ENCODE measurements at regions of chr2 and their contacts with region 1.

Region 1: GRCh38 chr2:9813312-9814133 is 29.8 kb upstream of the TAF1B start:
- DNase-seq: peak; percentile 64 to 86
- ATAC-seq: peak; percentile 86 to 96
- H3K4me3 ChIP-seq: 0 out of 3 replicates have a peak overlapping the region, but pooled peaks have one; percentile 17
- H3K27ac ChIP-seq: peak overlapping the region; percentile 36 to 43; a peak in 5 of 6 replicates
- H3K4me1 ChIP-seq: peaks cover 7% of the 10 kb centered on the region; the same call in 2 of the 3 replicates
- CTCF ChIP-seq: peak; percentile 98
- EP300 ChIP-seq: no peak
- POLR2A ChIP-seq: no peak
- RAD21 ChIP-seq: peak; percentile 90 to 93

Region 2: GRCh38 chr2:9326975-9327374 is 486.5 kb before region 1 on chr2:
- CTCF ChIA-PET with region 1: no interaction called
- POLR2A ChIA-PET with region 1: no interaction called
- DNase-seq: peak in 1 of 2 experiments; percentile 36
- ATAC-seq: 0 out of 6 replicates have a peak, but pooled peaks of 1 of the 2 experiments have one; percentile 26
- H3K4me3 ChIP-seq: no peak overlapping the region
- H3K27ac ChIP-seq: peak overlapping the region; percentile 44 to 76; a peak in 5 of 6 replicates
- H3K4me1 ChIP-seq: peaks cover 19% of the 10 kb centered on the region
- CTCF ChIP-seq: no peak
- EP300 ChIP-seq: no peak
- POLR2A ChIP-seq: no peak
- RAD21 ChIP-seq: no peak

Region 3: DNA sequence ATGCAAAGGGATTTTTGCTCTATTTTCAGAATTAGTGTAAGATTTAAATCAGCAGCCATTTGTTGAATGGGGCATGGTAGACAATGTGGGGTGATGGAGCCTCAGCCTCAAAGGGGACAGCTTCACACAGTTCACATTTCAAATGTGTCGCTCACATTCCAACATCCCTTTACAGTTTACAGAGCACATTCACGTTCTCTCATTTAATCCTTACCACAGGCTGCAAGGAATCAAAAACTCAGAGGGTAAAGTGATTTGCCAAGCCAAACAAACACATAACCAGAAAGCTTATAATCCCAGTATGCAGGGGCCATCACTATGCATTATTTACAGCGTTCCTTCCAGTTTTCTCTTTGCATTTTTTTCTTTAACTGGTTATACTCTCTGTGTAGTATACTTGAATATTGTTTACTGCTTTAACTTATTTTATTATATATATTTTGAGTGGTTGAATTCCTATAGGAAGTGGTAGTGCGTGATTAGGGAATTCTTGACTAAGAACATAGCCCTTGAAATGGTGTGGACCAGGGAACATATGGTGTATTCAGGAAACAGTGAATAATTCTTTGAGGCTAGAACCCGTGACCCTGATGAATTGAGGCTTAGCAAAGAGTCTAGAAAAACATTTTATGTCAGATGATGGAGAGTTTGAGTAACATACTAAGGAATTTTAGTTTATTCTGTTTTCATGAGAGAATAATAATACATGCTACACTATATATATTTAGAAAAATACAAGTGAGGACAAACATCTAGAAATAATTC is 11.6 kb after region 1 on chr2:
- CTCF ChIA-PET with region 1: interaction called, 43 read pairs
- POLR2A ChIA-PET with region 1: no interaction called
- DNase-seq: no peak
- ATAC-seq: no peak
- H3K4me3 ChIP-seq: no peak overlapping the region
- H3K27ac ChIP-seq: no peak overlapping the region
- H3K4me1 ChIP-seq: peaks cover 4% of the 10 kb centered on the region
- CTCF ChIP-seq: no peak
- EP300 ChIP-seq: no peak
- POLR2A ChIP-seq: no peak
- RAD21 ChIP-seq: no peak

Region 4: GRCh38 chr2:9852881-9853280 is 39.4 kb after region 1 on chr2:
- CTCF ChIA-PET with region 1: interaction called, 13 read pairs
- POLR2A ChIA-PET with region 1: no interaction called
- DNase-seq: no peak
- ATAC-seq: no peak
- H3K4me3 ChIP-seq: no peak overlapping the region
- H3K27ac ChIP-seq: no peak overlapping the region
- H3K4me1 ChIP-seq: no peaks in the 10 kb centered on the region
- CTCF ChIP-seq: no peak
- EP300 ChIP-seq: no peak
- POLR2A ChIP-seq: no peak
- RAD21 ChIP-seq: no peak

Region 5: DNA sequence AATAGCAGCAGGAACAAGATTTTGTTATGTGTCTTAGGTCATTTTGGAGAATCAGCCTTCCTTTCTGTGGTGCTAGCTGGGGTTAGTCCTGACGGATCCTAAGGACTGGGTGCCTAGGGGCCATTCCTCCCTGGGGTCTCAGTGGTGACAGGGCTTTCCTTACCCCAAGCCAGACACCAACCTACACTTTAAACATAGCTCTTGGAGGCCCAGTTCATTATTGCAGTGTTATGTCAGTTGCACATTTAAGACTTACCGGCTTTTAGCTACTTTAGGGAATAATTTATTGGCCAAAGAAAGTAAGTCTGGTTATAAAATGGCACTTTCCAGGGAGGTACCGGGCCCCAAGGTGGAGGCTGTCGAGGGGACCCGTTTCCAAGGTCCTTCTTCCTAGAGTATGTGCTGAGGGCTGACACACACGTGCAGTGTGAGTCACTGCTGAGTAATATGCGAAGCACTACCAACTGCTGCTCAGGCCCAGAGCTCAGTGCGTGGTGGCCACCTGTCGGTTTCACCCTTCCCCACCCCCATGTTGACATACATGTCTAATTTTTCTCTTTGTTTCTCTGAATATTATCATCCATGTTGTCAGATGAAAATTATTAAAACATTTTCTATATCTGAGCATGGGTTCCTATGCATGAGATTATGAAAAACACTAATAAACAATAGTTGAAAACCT is 101.0 kb after region 1 on chr2:
- CTCF ChIA-PET with region 1: interaction called, 58 read pairs
- POLR2A ChIA-PET with region 1: no interaction called
- DNase-seq: peak; percentile 60 to 77
- ATAC-seq: peak; percentile 99 to 100
- H3K4me3 ChIP-seq: no peak overlapping the region
- H3K27ac ChIP-seq: peak overlapping the region; percentile 34 to 58; a peak in 5 of 6 replicates
- H3K4me1 ChIP-seq: peaks cover 12% of the 10 kb centered on the region
- CTCF ChIP-seq: peak; percentile 59
- EP300 ChIP-seq: no peak
- POLR2A ChIP-seq: no peak
- RAD21 ChIP-seq: peak; percentile 68 to 74

Region 6: GRCh38 chr2:9998916-9999654 is 185.6 kb after region 1 on chr2:
- CTCF ChIA-PET with region 1: interaction called, 10 read pairs
- POLR2A ChIA-PET with region 1: no interaction called
- DNase-seq: no peak
- ATAC-seq: no peak
- H3K4me3 ChIP-seq: no peak overlapping the region
- H3K27ac ChIP-seq: no peak overlapping the region
- H3K4me1 ChIP-seq: no peaks in the 10 kb centered on the region
- CTCF ChIP-seq: no peak
- EP300 ChIP-seq: no peak
- POLR2A ChIP-seq: no peak
- RAD21 ChIP-seq: no peak

Region 7: DNA sequence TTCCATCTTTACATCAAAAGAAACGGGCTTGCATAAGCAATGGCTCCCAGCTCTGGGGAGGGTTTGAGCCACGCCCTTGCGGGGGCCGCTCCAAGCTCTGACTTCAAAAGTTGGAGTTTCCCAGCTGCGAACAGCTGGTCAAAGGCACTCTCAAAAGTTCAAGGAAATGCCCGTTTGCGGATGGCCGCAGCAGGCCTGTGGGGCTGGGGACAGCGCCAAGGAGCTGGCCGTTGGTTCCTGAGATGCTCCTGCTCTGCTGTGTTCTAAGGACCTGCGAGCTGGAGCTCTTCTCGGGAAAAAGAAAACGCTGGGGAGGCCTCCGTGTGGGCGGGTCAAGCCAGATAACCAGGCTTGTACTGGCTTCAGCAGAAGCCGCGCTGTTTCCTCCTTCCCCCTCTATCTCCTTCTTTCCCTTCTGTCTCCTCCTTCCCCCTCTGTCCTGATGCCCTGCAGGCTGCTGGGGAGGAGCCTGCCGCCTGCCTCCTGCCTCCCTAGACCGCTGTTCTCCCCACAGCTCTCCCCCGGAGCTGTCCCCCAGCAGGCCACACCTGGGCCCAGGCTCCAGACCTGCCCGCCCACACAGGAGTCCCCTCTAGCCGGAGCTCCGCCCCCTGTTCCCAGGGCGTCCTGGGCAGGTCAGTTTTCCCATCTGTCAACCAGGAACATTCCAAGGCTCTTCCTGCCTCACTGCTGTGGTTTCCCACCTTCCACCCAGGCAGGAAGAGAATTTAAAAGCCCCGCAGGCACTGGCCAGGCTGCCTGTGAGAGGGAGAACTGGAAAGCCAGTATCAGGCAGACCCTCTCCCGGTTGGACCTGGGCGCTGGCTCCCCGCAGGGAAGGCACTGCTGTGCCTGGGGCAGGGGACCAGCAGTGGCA is 243.9 kb after region 1 on chr2:
- CTCF ChIA-PET with region 1: interaction called, 232 read pairs
- POLR2A ChIA-PET with region 1: no interaction called
- DNase-seq: no peak
- ATAC-seq: peak in 1 of 2 experiments; percentile 16; a peak in 3 of 6 replicates
- H3K4me3 ChIP-seq: no peak overlapping the region
- H3K27ac ChIP-seq: no peak overlapping the region
- H3K4me1 ChIP-seq: no peaks in the 10 kb centered on the region
- CTCF ChIP-seq: no peak
- EP300 ChIP-seq: no peak
- POLR2A ChIP-seq: no peak
- RAD21 ChIP-seq: no peak

Measured in A549 (cell line).